BJ (cell line): ENCODE measurements at regions of chr14 and their contacts with region 1.

Region 1: DNA sequence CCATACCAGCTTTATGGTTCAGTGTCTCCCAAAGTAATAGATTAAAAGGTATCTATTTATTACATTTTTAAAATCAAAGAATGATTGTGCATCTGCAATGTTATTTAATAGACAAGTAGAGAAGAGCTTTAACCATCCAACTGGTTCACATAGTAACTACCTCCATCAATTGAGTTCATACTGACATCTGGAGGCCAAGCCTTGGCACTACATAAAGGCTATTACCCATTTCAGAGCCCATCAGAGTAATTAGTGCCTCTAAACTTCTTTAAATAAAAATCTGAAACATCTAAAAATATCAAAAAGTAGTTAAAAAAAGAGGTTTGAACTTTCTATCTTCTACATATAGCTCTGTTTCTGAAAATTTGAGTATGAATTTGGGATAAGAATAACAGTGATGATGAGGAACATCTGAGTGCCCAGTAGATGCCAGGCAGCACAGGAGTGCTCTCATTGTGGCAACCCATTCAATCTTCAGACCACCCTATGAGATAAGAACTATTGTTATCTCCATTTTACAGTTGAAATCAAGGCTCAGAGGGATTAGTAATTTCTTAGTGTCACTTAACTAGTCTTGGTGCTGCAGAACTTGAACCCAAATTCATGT is 132.9 kb upstream of the DAAM1 start:
- DNase-seq: peak; percentile 9
- H3K4me3 ChIP-seq: no peak overlapping the region
- H3K27me3 ChIP-seq: no peaks in the 10 kb centered on the region
- CTCF ChIP-seq: peak; percentile 85

Region 2: GRCh38 chr14:58598028-58598803 is 457.3 kb before region 1 on chr14:
- CTCF ChIA-PET with region 1: no interaction called
- POLR2A ChIA-PET with region 1: no interaction called
- DNase-seq: no peak
- H3K4me3 ChIP-seq: no peak overlapping the region
- H3K27me3 ChIP-seq: peaks cover 5% of the 10 kb centered on the region
- CTCF ChIP-seq: no peak

Region 3: DNA sequence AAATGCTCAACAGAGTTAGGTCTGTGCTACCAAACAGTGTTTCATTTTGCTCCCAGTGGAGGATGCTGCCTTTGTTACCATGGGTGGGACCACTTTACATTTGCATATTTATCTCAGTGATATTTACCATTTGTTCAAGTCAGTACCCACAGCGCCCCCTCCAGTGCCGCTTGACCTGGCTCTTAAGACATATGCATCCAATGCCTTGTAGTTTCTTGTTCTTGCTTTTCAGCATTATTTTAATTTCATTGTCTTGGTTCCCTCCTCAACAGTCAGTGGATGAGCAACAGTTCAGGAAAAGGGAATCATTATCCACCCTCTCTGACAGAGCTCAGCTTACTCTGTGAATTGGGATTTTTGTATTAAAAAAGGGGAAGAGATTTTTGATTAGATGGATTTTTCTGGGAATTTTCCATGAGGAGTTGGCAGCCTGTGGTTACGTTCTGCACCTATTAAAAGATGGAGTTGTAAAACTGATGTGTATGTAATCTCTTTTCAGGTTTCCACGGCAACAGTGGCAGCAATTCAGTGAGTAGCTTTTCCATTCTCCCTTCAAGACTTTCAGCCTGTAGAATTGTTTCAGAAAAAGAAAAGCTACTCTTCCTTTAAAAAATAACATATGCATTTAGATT is 107.6 kb before region 1 on chr14:
- CTCF ChIA-PET with region 1: no interaction called
- POLR2A ChIA-PET with region 1: no interaction called
- DNase-seq: no peak
- H3K4me3 ChIP-seq: no peak overlapping the region
- H3K27me3 ChIP-seq: peaks cover 10% of the 10 kb centered on the region
- CTCF ChIP-seq: no peak

Region 4: GRCh38 chr14:59028476-59029202 is 26.9 kb before region 1 on chr14:
- CTCF ChIA-PET with region 1: interaction called, 10 read pairs
- POLR2A ChIA-PET with region 1: no interaction called
- DNase-seq: peak; percentile 93
- H3K4me3 ChIP-seq: no peak overlapping the region
- H3K27me3 ChIP-seq: no peaks in the 10 kb centered on the region
- CTCF ChIP-seq: peak; percentile 91

Region 5: DNA sequence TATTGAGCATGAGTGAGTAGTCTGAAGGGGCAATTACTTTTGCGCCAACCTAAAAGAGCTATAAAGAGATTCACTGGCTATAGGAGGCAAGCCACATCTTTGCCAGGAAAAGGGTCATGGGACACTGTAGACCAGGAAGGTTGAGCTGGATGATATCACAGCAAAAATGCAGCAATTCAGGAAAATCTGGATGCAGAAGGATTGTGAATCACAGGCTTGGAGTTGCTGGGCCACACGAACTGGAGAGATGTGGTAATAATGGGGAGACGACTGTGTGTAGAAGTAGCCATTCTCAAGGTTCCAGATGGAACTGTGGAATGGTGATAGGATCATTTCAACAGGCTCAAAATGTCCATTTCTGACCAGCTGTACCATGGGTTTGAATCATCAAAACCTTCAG is 18.5 kb before region 1 on chr14:
- CTCF ChIA-PET with region 1: interaction called, 14 read pairs
- POLR2A ChIA-PET with region 1: no interaction called
- DNase-seq: no peak
- H3K4me3 ChIP-seq: no peak overlapping the region
- H3K27me3 ChIP-seq: no peaks in the 10 kb centered on the region
- CTCF ChIP-seq: no peak

Region 6: GRCh38 chr14:59067127-59067894 is 11.8 kb after region 1 on chr14:
- CTCF ChIA-PET with region 1: interaction called, 10 read pairs
- POLR2A ChIA-PET with region 1: no interaction called
- DNase-seq: no peak
- H3K4me3 ChIP-seq: no peak overlapping the region
- H3K27me3 ChIP-seq: 0 out of 2 replicates have a peak, but pooled peaks cover 2% of the 10 kb centered on the region
- CTCF ChIP-seq: no peak